ENCODE measurements at regions of chr16 and their contacts with region 1.

Region 1: DNA sequence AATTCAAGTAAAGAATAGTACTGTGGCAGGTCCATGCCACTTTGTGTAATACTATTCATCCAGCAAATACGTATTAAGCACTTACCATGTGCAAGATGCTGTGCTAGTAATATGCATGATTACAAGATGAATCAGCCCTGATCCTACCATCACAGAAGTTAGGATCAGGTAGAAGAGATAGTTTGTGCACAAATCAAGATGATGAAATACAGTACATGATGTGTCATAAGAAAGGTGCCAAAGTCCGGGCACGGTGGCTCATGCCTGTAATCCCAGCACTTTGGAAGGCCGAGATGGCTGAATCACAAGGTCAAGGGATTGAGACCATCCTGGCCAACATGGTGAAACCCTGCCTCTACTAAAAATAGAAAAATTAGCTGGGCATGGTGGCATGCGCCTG is 10.9 kb downstream of the COG4 start:
- DNase-seq: no peak
- H3K4me3 ChIP-seq: no peak overlapping the region
- H3K27ac ChIP-seq: no peak overlapping the region
- H3K4me1 ChIP-seq: no peaks in the 10 kb centered on the region
- H3K27me3 ChIP-seq: no peaks in the 10 kb centered on the region
- CTCF ChIP-seq: no peak
- POLR2A ChIP-seq: no peak

Region 2: GRCh38 chr16:69031877-69032301 is 1480.6 kb before region 1 on chr16:
- intact Hi-C with region 1: no loop called
- DNase-seq: no peak
- H3K4me3 ChIP-seq: no peak overlapping the region
- H3K27ac ChIP-seq: no peak overlapping the region
- H3K4me1 ChIP-seq: peaks cover 0 to 16% (median 4%) of the 10 kb centered on the region in 3 donors
- H3K27me3 ChIP-seq: no peaks in the 10 kb centered on the region
- CTCF ChIP-seq: no peak
- POLR2A ChIP-seq: no peak

Region 3: DNA sequence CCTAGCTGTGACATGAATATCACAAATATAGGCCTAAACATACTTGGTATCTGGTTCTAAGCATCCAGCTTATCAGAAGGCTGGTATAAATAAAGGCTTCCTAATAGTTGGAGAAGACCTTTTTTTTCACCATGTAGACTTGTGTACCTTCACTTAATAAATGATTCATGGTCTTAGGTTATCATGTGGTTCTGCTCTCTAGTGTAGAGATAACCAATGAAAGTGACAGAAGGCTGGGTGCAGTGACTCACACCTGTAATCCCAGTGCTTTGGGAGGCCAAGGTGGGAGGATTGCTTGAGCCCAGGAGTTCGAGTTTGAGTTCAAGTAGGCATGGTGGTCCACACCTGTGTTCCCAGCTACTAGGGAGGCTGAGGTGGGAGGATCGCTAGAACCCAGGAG is 162.7 kb before region 1 on chr16:
- intact Hi-C with region 1: loop called (anchors 10 kb)
- DNase-seq: no peak
- H3K4me3 ChIP-seq: no peak overlapping the region
- H3K27ac ChIP-seq: no peak overlapping the region
- H3K4me1 ChIP-seq: peaks cover 14 to 31% (median 15%) of the 10 kb centered on the region in 3 donors
- H3K27me3 ChIP-seq: no peaks in the 10 kb centered on the region
- CTCF ChIP-seq: no peak
- POLR2A ChIP-seq: no peak

Region 4: GRCh38 chr16:70679666-70680494 is 167.4 kb after region 1 on chr16:
- intact Hi-C with region 1: no loop called
- DNase-seq: no peak
- H3K4me3 ChIP-seq: peak overlapping the region in 1 of 4 donors; percentile 21
- H3K27ac ChIP-seq: peak overlapping the region in 3 of 4 donors; percentile 76 to 95 (median 88)
- H3K4me1 ChIP-seq: peaks cover 37 to 63% (median 48%) of the 10 kb centered on the region in 3 donors
- H3K27me3 ChIP-seq: no peaks in the 10 kb centered on the region
- CTCF ChIP-seq: peak in 4 of 6 experiments; percentile 37 to 60 (median 58)
- POLR2A ChIP-seq: no peak